HCT116 (cell line): ENCODE measurements at regions of chr9 and their contacts with region 1.

Region 1: GRCh38 chr9:84736081-84736480 is 66.6 kb downstream of the NTRK2 start:
- DNase-seq: no peak
- ATAC-seq: no peak
- H3K4me3 ChIP-seq: no peak overlapping the region
- H3K27ac ChIP-seq: no peak overlapping the region
- H3K4me1 ChIP-seq: no peaks in the 10 kb centered on the region
- H3K27me3 ChIP-seq: no peaks in the 10 kb centered on the region
- CTCF ChIP-seq: no peak
- POLR2A ChIP-seq: no peak
- RAD21 ChIP-seq: no peak

Region 2: DNA sequence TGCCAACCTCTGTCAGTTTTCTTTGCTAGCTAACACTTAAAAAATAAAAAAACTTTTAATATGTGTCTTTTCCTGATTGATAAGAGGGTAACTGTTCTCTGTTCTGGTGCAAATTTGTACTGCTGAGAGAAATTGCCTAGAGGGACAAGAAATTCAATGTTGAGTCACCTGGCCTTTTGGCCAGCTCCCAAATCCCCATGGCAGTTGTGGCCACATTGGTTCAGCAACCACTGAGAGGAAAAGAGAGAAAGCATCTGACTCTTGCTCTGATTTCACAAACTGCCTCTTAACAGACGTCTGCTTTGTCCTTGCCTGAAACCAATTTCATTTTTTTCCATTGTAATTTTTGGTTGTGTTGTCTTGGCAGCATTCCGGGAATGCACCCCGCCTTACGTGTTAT is 24.2 kb before region 1 on chr9:
- CTCF ChIA-PET with region 1: no interaction called
- POLR2A ChIA-PET with region 1: no interaction called
- RAD21 ChIA-PET with region 1: no interaction called
- intact Hi-C with region 1: loop called (anchors 2 kb)
- DNase-seq: no peak
- ATAC-seq: no peak
- H3K4me3 ChIP-seq: no peak overlapping the region
- H3K27ac ChIP-seq: no peak overlapping the region
- H3K4me1 ChIP-seq: no peaks in the 10 kb centered on the region
- H3K27me3 ChIP-seq: peaks cover 31% of the 10 kb centered on the region; the same call in 1 of the 2 replicates
- CTCF ChIP-seq: no peak
- POLR2A ChIP-seq: no peak
- RAD21 ChIP-seq: no peak